Calu3 (cell line): ENCODE measurements at regions of chr3 and their contacts with region 1.

Region 1: DNA sequence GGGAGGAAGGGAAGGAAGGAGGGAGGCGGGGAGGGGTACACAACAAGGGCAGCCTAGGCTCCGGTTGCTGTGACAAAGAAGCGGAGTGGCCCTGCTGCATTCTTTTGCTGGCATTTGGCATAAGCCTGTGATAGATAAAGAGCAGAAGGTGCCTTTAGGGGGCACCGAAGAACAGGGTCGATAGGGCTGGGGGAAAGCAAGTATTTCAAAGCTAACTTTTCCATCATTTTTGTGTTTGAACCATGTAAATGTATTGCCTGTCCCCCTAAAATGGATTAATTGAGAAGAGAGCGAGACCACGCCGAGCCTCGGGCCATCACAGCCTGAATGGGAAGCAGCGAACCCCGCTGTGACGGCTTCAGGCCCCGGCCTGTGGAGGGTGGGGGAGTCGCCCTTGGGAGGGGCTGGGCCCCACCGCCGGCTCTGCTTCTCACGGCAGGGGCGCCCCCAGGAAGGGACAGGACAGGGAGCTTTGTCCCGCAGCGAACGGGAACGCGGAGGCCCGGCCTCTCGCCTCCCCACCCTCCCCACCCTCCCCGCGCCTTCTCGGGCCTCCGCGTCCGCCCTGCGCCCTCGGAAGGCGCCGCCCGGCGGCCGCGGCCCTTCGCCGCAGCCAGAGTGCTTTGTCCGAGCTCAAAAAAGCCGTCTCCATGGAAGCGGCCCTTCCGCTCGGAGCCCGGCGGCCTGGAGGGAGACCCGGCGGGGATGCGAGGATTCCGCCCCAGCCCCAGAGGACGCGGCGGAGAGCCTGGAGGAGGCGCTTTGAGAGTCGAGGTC is 32.4 kb upstream of the ALDH1L1 start:
- DNase-seq: peak; percentile 74
- H3K4me3 Mint-ChIP-seq: peak overlapping the region; percentile 66
- H3K27ac Mint-ChIP-seq: peak overlapping the region; percentile 52
- H3K4me1 Mint-ChIP-seq: peaks cover 55% of the 10 kb centered on the region
- H3K27me3 Mint-ChIP-seq: no peaks in the 10 kb centered on the region
- CTCF ChIP-seq: peak; percentile 46

Region 2: DNA sequence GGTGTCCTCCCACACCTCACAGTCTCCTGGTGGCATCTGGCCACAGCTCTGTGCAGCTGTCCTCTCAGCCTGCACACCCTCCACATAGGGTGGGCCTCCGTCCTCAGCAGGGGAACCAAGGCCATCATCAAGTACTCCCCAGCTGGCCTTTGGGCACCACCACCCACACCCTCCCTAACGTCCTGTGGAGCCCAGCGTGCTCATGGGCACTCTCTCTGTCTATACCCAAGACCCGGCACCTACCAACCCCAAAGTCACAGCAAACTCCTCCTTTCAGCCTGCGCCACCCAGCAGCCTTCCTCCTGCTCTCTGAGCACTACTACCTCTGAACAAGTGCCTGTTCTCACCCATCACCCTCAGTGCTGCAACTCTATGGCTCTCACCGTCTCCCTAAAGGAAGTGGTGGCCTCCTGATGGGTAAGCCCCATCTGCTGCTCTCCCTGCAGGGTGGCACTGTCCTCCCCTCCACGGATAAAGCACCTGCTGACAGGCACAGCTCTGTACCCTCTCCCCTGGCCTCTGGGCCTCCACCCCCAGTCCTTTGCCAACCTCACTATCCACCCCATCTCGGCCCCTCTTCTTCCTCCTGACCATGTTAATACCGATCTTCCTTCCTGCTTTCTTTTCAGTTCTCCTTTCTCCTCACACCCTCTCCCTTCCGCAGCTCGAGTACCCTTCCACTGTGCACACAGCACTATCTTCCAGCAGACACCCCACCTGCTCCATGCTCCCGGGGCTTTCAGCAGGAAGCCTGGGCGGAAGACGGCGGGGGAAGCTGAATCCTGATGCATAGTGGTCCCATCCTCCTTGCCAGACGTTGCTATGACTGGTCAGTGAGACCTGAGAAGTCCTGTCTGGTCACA is 160.4 kb before region 1 on chr3:
- CTCF ChIA-PET with region 1: no interaction called
- intact Hi-C with region 1: no loop called
- DNase-seq: no peak
- H3K4me3 Mint-ChIP-seq: no peak overlapping the region
- H3K27ac Mint-ChIP-seq: no peak overlapping the region
- H3K4me1 Mint-ChIP-seq: peaks cover 16% of the 10 kb centered on the region
- H3K27me3 Mint-ChIP-seq: no peaks in the 10 kb centered on the region
- CTCF ChIP-seq: no peak

Region 3: GRCh38 chr3:126180477-126181397 is 32.1 kb before region 1 on chr3 and contains the start of gene ALDH1L1:
- CTCF ChIA-PET with region 1: no interaction called
- intact Hi-C with region 1: loop called (anchors 2 kb)
- DNase-seq: peak; percentile 85
- H3K4me3 Mint-ChIP-seq: peak within 1 kb of the TSS; percentile 81
- H3K27ac Mint-ChIP-seq: peak within 1 kb of the TSS; percentile 42
- H3K4me1 Mint-ChIP-seq: peaks cover 21% of the 10 kb centered on the region
- H3K27me3 Mint-ChIP-seq: peaks cover 9% of the 10 kb centered on the region
- CTCF ChIP-seq: peak; percentile 11
- total RNA-seq, gene ALDH1L1: 4.4 and 11.2 TPM in 2 replicates

Region 4: GRCh38 chr3:126245811-126246727 is 33.3 kb after region 1 on chr3:
- CTCF ChIA-PET with region 1: interaction called, 10 read pairs
- intact Hi-C with region 1: no loop called
- DNase-seq: peak; percentile 61
- H3K4me3 Mint-ChIP-seq: no peak overlapping the region
- H3K27ac Mint-ChIP-seq: no peak overlapping the region
- H3K4me1 Mint-ChIP-seq: no peaks in the 10 kb centered on the region
- H3K27me3 Mint-ChIP-seq: peaks cover 54% of the 10 kb centered on the region
- CTCF ChIP-seq: peak; percentile 43